Common myeloid progenitor, CD34-positive (primary cell): ENCODE measurements at regions of chr16 and their contacts with region 1.

Region 1: GRCh38 chr16:47141773-47142485 is 1.8 kb downstream of the NETO2 start:
- DNase-seq: peak; percentile 80 to 86 (median 85)
- H3K4me3 ChIP-seq: peak overlapping the region in 6 of 7 experiments; percentile 47 to 76 (median 72)
- H3K27ac ChIP-seq: peak overlapping the region in 1 of 2 experiments; percentile 58
- H3K4me1 ChIP-seq: peaks cover 9 to 28% (median 25%) of the 10 kb centered on the region in 4 experiments
- H3K27me3 ChIP-seq: peaks cover 8 to 46% (median 16%) of the 10 kb centered on the region in 5 experiments

Region 2: DNA sequence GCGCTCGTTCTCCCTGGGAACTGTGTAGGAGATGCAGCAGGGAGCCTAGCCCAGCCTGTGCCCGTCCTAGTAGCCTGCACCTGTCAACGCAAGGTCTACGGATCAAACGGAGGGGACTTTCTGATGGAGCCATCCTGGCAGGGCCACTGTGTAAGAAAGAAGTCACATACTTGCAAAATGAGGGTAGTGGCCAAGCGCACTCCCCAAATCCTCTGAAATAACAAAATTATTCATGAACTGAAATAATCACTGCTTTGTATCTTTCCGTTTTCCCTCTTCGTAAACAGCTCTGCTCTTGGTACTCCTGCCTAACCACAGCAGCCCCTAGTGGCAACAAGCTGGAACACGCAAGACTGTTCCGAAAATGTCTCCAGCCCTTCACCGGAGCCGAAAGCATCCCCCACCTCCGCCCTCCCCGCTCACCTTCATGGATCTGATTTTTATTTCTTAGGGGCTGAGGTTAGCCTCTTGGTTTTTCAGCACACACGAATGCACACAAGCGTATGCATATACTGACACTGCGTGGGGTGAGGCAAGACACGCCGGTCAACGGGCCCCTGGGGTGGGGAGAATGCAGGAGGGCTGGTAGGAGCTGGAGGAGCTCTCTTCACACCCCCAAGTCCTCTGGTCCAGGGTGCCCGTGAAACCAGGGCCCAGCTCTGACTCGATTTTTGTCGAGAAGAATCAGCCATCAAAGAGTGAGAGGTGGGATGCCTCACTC is 913.1 kb after region 1 on chr16:
- CTCF ChIA-PET with region 1: interaction called, 13 read pairs
- POLR2A ChIA-PET with region 1: no interaction called
- DNase-seq: peak; percentile 25 to 65 (median 64)
- H3K4me3 ChIP-seq: no peak overlapping the region
- H3K27ac ChIP-seq: no peak overlapping the region
- H3K4me1 ChIP-seq: peaks cover 0 to 2% (median 0%) of the 10 kb centered on the region in 4 experiments
- H3K27me3 ChIP-seq: peaks cover 0 to 36% (median 16%) of the 10 kb centered on the region in 5 experiments

Region 3: GRCh38 chr16:48113471-48113870 is 971.5 kb after region 1 on chr16:
- CTCF ChIA-PET with region 1: interaction called, 15 read pairs
- POLR2A ChIA-PET with region 1: no interaction called
- DNase-seq: no peak
- H3K4me3 ChIP-seq: no peak overlapping the region
- H3K27ac ChIP-seq: no peak overlapping the region
- H3K4me1 ChIP-seq: no peaks in the 10 kb centered on the region
- H3K27me3 ChIP-seq: peaks cover 0 to 3% (median 0%) of the 10 kb centered on the region in 5 experiments